Mammary epithelial cell (primary cell): ENCODE measurements at regions of chr2 and their contacts with region 1.

Region 1: DNA sequence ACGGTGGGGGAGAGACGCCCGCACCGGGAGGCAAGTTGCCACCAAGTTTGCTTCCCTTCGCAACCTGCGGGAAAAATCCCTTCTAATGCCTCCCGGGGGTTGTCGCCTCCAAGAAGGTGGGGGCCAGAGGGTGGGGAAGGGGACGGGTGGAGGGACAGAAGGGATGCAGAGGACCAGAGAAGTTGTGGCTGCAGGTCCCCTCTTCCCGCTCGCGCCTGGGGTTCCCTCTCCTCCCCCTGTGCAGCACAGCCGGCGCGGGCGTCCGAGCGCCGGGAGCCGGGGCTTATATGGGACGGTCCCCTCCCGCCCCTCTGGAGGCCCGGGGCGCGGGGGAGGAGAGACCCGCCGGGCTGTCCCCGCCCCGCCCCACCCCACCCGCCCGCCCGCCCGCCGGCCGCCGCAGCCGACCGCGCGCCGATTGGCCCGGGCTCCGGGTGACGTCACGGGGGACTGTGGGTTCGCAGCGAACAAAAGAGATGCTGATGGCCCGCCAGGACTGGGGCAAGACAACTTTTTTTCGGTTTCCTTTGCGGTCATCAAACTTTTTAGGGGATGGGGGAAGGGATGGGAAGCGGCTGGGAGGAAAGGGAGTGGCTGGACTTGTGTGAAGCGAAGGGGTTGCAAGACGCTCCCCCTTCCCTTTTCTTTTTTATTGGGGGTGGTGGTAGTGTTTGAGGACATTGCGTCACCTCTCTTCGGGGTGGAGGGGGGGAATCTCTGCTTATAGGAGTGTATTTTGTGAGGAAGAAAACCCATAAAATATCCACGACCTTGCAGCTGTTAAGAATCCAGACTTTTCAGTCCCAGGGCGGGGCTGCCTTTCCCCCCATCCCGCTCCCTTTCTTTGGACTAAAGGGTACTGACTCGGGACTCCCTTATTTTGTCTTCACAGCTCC is at the start of gene FN1:
- DNase-seq: peak; percentile 96
- H3K4me3 ChIP-seq: peak within 1 kb of the TSS; percentile 65 to 89 (median 85)
- H3K27ac ChIP-seq: peak within 1 kb of the TSS; percentile 97
- H3K4me1 ChIP-seq: peaks cover 46% of the 10 kb centered on the region
- H3K27me3 ChIP-seq: no peaks in the 10 kb centered on the region
- CTCF ChIP-seq: no peak
- total RNA-seq, gene FN1: 11,348 to 20,313 TPM

Region 2: DNA sequence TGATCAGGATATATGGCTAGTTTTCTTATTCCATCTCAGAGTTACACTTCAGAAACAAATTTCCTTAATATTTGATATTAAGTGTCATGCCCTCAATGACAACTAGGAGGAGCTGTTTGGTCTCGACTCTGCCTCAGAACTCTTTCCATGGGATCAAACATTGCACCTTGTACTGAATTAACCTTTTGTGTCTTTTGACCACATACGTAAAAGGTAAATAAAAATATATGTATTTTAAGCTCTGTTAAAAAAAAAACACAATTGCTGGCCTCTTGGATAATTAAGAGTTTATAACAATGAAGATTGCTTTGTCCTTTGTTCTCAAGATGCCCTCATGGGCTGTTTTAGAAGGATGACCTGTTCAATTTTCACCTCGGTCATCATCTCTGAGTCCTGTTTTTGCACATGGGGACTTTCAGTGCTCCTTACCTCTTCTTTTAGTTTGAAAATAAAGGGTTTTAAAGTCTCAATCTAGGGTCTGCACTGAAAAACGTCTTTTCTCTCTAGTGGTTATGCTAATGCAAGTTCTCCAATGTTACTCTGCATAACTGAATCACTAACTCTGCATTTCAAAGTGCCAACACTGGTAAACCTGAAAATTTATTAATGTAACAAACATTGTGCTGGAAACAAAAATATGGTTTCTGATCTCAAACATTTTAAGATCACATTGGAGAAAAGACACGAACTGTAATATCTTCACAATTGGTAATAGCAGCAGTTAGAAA is 18.6 kb after region 1 on chr2:
- CTCF ChIA-PET with region 1: no interaction called
- dilution Hi-C with region 1: no loop called
- in situ Hi-C with region 1: no loop called
- intact Hi-C with region 1: loop called (anchors 2 kb)
- DNase-seq: peak; percentile 43
- H3K4me3 ChIP-seq: no peak overlapping the region
- H3K27ac ChIP-seq: no peak overlapping the region
- H3K4me1 ChIP-seq: peaks cover 6% of the 10 kb centered on the region
- H3K27me3 ChIP-seq: no peaks in the 10 kb centered on the region
- CTCF ChIP-seq: peak; percentile 84 to 87

Region 3: GRCh38 chr2:215507136-215507535 is 71.1 kb after region 1 on chr2:
- CTCF ChIA-PET with region 1: no interaction called
- dilution Hi-C with region 1: no loop called
- in situ Hi-C with region 1: no loop called
- intact Hi-C with region 1: no loop called
- DNase-seq: no peak
- H3K4me3 ChIP-seq: no peak overlapping the region
- H3K27ac ChIP-seq: no peak overlapping the region
- H3K4me1 ChIP-seq: peaks cover 3% of the 10 kb centered on the region
- H3K27me3 ChIP-seq: no peaks in the 10 kb centered on the region
- CTCF ChIP-seq: no peak

Region 4: GRCh38 chr2:215664847-215665525 is 228.9 kb after region 1 on chr2:
- CTCF ChIA-PET with region 1: no interaction called
- dilution Hi-C with region 1: no loop called
- in situ Hi-C with region 1: no loop called
- intact Hi-C with region 1: loop called (anchors 10 kb)
- DNase-seq: peak; percentile 96
- H3K4me3 ChIP-seq: no peak overlapping the region
- H3K27ac ChIP-seq: peak overlapping the region; percentile 76
- H3K4me1 ChIP-seq: peaks cover 49% of the 10 kb centered on the region
- H3K27me3 ChIP-seq: no peaks in the 10 kb centered on the region
- CTCF ChIP-seq: no peak

Region 5: GRCh38 chr2:215680605-215681598 is 244.8 kb after region 1 on chr2:
- CTCF ChIA-PET with region 1: no interaction called
- dilution Hi-C with region 1: no loop called
- in situ Hi-C with region 1: no loop called
- intact Hi-C with region 1: loop called (anchors 5 kb)
- DNase-seq: peak; percentile 100
- H3K4me3 ChIP-seq: no peak overlapping the region
- H3K27ac ChIP-seq: peak overlapping the region; percentile 88
- H3K4me1 ChIP-seq: peaks cover 16% of the 10 kb centered on the region
- H3K27me3 ChIP-seq: no peaks in the 10 kb centered on the region
- CTCF ChIP-seq: no peak

Region 6: GRCh38 chr2:215698566-215698965 is 262.5 kb after region 1 on chr2:
- CTCF ChIA-PET with region 1: no interaction called
- dilution Hi-C with region 1: no loop called
- in situ Hi-C with region 1: no loop called
- intact Hi-C with region 1: loop called (anchors 5 kb)
- DNase-seq: peak; percentile 99
- H3K4me3 ChIP-seq: no peak overlapping the region
- H3K27ac ChIP-seq: peak overlapping the region; percentile 83
- H3K4me1 ChIP-seq: peaks cover 36% of the 10 kb centered on the region
- H3K27me3 ChIP-seq: no peaks in the 10 kb centered on the region
- CTCF ChIP-seq: no peak

Region 7: GRCh38 chr2:215920244-215921100 is 484.4 kb after region 1 on chr2:
- CTCF ChIA-PET with region 1: no interaction called
- dilution Hi-C with region 1: no loop called
- in situ Hi-C with region 1: no loop called
- intact Hi-C with region 1: loop called (anchors 5 kb)
- DNase-seq: peak; percentile 62
- H3K4me3 ChIP-seq: no peak overlapping the region
- H3K27ac ChIP-seq: no peak overlapping the region
- H3K4me1 ChIP-seq: peaks cover 22% of the 10 kb centered on the region
- H3K27me3 ChIP-seq: no peaks in the 10 kb centered on the region
- CTCF ChIP-seq: peak; percentile 83 to 93